K562 (cell line): ENCODE measurements at regions of chr4 and their contacts with region 1.

Region 1: GRCh38 chr4:16264798-16265197 is 38.5 kb upstream of the TAPT1 start:
- DNase-seq: peak in 2 of 4 experiments; percentile 30 to 34
- ATAC-seq: peak; percentile 79
- H3K4me3 ChIP-seq: no peak overlapping the region
- H3K27ac ChIP-seq: no peak overlapping the region
- H3K4me1 ChIP-seq: no peaks in the 10 kb centered on the region
- H3K27me3 ChIP-seq: no peaks in the 10 kb centered on the region
- CTCF ChIP-seq: peak; percentile 33 to 69 (median 40); a peak in 3 of 6 replicates
- EP300 ChIP-seq: no peak
- POLR2A ChIP-seq: no peak
- RAD21 ChIP-seq: peak; percentile 77 to 79

Region 2: DNA sequence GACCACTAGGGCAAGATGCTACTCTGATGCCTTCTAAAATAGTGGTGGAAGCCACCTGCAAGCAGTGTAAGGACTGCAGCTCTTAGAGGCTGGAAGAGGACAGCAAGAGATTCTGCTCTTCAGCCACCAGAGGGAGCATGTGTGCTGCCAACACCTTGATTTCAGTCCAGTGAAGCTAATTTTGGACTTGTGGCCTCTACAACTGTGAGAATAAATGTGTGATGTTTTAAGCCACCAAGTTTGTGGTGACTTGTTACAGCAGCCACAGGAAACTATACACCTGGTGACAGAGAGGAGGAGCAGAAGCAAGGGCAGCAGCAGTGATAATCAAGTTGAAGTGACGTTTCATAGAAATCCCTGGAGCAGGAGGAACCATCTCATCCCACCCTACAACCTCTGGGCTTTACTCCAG is 382.1 kb before region 1 on chr4:
- CTCF ChIA-PET with region 1: no interaction called
- POLR2A ChIA-PET with region 1: no interaction called
- in situ Hi-C with region 1: no loop called
- intact Hi-C with region 1: loop called (anchors 10 kb)
- DNase-seq: peak; percentile 44 to 70 (median 50)
- ATAC-seq: peak; percentile 96
- H3K4me3 ChIP-seq: no peak overlapping the region
- H3K27ac ChIP-seq: no peak overlapping the region
- H3K4me1 ChIP-seq: no peaks in the 10 kb centered on the region
- H3K27me3 ChIP-seq: no peaks in the 10 kb centered on the region; a peak in 1 of 5 replicates
- CTCF ChIP-seq: peak; percentile 76 to 78 (median 78)
- EP300 ChIP-seq: no peak
- POLR2A ChIP-seq: no peak
- RAD21 ChIP-seq: peak; percentile 49 to 67

Region 3: DNA sequence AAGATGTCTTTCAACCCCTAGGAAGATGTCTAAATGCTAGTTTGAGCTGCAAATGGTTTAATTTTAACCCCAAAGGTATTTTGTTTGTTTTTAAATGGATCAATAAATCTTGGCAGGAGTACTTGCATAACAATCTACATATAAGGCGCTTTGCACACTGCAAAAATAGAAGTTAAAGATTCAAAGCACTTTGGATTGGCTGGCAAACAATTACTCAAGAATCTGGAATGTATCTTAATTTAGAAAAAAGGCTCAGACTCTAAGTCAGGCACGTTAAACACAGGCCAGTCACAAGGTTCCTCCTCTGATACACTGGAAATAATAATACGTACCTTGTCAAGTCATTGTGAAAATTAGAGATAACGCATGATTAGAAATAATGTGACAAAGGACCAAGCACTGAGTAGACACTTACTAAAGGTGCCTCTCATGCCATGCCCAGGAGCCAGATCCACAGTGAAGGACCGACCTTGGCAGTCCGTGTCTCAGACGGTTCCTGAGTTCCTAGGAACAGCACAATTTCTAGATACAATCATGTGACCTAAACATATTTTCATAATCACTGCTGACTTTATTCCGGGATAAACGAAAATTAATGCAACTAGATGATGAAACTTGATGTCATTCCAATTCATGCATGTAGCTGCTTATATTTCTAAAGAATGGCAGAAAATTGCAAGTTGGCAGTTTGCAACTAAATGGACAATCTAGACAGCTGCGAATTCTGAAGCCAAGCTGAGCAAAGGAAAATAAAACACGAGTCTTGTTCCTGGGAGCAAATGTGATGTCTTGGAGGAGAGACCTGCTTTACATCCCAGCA is 230.6 kb before region 1 on chr4:
- CTCF ChIA-PET with region 1: interaction called, 3 read pairs
- POLR2A ChIA-PET with region 1: no interaction called
- in situ Hi-C with region 1: loop called (anchors 5 kb)
- intact Hi-C with region 1: no loop called
- DNase-seq: no peak
- ATAC-seq: no peak
- H3K4me3 ChIP-seq: no peak overlapping the region
- H3K27ac ChIP-seq: no peak overlapping the region
- H3K4me1 ChIP-seq: no peaks in the 10 kb centered on the region
- H3K27me3 ChIP-seq: peaks cover 10 to 15% of the 10 kb centered on the region in 2 experiments; a peak in 4 of 5 replicates
- CTCF ChIP-seq: no peak
- EP300 ChIP-seq: no peak
- POLR2A ChIP-seq: no peak
- RAD21 ChIP-seq: no peak

Region 4: GRCh38 chr4:17316566-17316965 is 1051.8 kb after region 1 on chr4:
- CTCF ChIA-PET with region 1: no interaction called
- POLR2A ChIA-PET with region 1: no interaction called
- in situ Hi-C with region 1: no loop called
- intact Hi-C with region 1: no loop called
- DNase-seq: no peak
- ATAC-seq: no peak
- H3K4me3 ChIP-seq: no peak overlapping the region
- H3K27ac ChIP-seq: no peak overlapping the region
- H3K4me1 ChIP-seq: no peaks in the 10 kb centered on the region
- H3K27me3 ChIP-seq: no peaks in the 10 kb centered on the region
- CTCF ChIP-seq: no peak
- EP300 ChIP-seq: no peak
- POLR2A ChIP-seq: no peak
- RAD21 ChIP-seq: no peak